Activated CD8-positive, alpha-beta T cell treated with anti-CD3 and anti-CD28 coated beads for 36 hours (primary cell): ENCODE measurements at regions of chr14 and their contacts with region 1.

Region 1: GRCh38 chr14:73633116-73634010 is 11.4 kb upstream of the DNAL1 start:
- DNase-seq: peak; percentile 74
- ATAC-seq: peak; percentile 88
- H3K4me3 Mint-ChIP-seq: peak overlapping the region; percentile 62
- H3K27ac Mint-ChIP-seq: peak overlapping the region; percentile 34
- H3K4me1 Mint-ChIP-seq: peaks cover 4% of the 10 kb centered on the region
- H3K27me3 Mint-ChIP-seq: peaks cover 5% of the 10 kb centered on the region
- CTCF ChIP-seq: peak; percentile 93

Region 2: DNA sequence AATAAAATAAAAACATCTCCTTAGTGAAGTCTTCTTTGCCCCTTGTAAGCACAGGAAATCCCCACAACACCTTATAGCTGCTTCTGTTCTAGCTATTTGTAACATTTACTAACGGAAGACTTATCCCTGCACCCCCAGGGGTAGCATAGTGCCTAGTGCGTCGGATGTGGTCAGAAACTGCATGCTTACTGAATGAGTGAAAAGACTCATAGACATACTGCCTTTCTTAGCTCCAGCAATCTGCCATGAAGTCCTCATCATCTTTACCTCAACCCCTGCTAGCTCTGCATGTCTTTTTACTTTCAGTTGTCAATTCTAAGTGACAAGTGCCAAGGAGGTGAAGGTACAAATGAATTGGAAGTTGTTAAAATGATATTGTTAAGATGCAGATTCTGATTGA is 129.7 kb before region 1 on chr14:
- CTCF ChIA-PET with region 1: interaction called, 33 read pairs
- POLR2A ChIA-PET with region 1: no interaction called
- intact Hi-C with region 1: loop called (anchors 2 kb)
- DNase-seq: peak; percentile 22
- ATAC-seq: peak; percentile 81
- H3K4me3 Mint-ChIP-seq: no peak overlapping the region
- H3K27ac Mint-ChIP-seq: no peak overlapping the region
- H3K4me1 Mint-ChIP-seq: no peaks in the 10 kb centered on the region
- H3K27me3 Mint-ChIP-seq: no peaks in the 10 kb centered on the region
- CTCF ChIP-seq: no peak

Region 3: DNA sequence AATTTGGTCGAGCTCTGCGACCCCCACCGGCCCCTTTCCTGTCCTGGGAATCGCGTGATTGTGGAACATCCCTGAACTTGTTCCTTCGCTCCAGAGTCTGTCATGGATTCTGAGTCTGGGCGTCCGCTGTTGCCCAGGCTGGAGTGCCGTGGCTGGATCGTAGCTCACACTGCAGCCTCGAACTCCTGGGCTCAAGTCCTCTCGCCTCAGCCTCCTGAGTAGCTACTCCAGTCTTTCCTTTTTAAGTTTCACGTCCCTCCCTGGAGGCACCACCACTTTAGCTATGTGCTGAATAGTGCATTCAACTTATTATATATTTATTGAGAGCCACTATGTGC is 20.3 kb before region 1 on chr14:
- CTCF ChIA-PET with region 1: interaction called, 12 read pairs
- POLR2A ChIA-PET with region 1: interaction called, 5 read pairs
- intact Hi-C with region 1: no loop called
- DNase-seq: no peak
- ATAC-seq: peak; percentile 9
- H3K4me3 Mint-ChIP-seq: peak overlapping the region; percentile 78
- H3K27ac Mint-ChIP-seq: peak overlapping the region; percentile 72
- H3K4me1 Mint-ChIP-seq: peaks cover 2% of the 10 kb centered on the region
- H3K27me3 Mint-ChIP-seq: no peaks in the 10 kb centered on the region
- CTCF ChIP-seq: no peak

Region 4: GRCh38 chr14:73644531-73645247 is 11.3 kb after region 1 on chr14 and contains the start of gene DNAL1:
- CTCF ChIA-PET with region 1: interaction called, 22 read pairs
- POLR2A ChIA-PET with region 1: interaction called, 5 read pairs
- intact Hi-C with region 1: no loop called
- DNase-seq: peak; percentile 94
- ATAC-seq: peak; percentile 100
- H3K4me3 Mint-ChIP-seq: peak within 1 kb of the TSS; percentile 81
- H3K27ac Mint-ChIP-seq: peak within 1 kb of the TSS; percentile 93
- H3K4me1 Mint-ChIP-seq: peaks cover 11% of the 10 kb centered on the region
- H3K27me3 Mint-ChIP-seq: no peaks in the 10 kb centered on the region
- CTCF ChIP-seq: no peak
- total RNA-seq, gene DNAL1: 4.8 to 5.9 TPM